SK-N-SH (cell line): ENCODE measurements at regions of chr6 and their contacts with region 1.

Region 1: DNA sequence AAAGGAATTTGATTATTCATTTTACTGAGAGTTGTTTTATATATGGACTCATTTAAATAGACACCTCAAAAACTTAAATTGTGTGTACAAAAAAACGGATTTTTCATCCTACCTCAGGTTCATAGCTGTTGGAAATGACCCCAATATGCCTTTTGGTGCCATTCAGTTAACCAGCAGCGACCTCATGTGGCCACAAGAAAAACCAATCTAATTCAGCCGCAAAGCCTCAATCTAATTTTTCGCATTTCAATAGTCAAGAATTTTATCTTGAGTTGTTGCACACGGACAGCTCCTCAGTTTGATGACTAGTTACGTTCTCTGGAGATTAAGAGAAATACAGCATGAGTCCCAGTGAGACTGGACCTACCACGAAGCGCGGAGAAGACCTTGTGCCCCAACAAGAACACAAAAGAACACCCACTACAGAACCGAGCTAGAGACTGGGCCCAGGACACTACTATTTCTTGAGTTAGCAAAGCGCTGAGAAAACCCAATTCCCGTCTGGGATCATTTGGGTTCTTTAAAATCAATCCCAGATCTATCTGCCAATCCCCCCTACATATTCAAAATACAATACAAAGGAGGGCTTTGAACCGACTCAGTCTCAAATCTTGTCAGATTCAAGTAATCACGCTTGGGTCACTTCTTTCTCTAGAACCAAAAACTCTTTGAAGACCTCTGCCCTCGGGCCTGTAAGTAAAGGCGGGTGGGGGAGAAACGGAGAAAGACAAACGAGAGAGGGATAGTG is 1.1 kb downstream of the TCP11 start:
- DNase-seq: peak; percentile 70
- H3K4me3 ChIP-seq: peak overlapping the region in 1 of 2 experiments; percentile 14; a peak in 1 of 4 replicates
- H3K27ac ChIP-seq: no peak overlapping the region
- H3K4me1 ChIP-seq: no peaks in the 10 kb centered on the region
- H3K27me3 ChIP-seq: no peaks in the 10 kb centered on the region
- CTCF ChIP-seq: peak; percentile 94
- EP300 ChIP-seq: no peak
- RAD21 ChIP-seq: peak; percentile 99

Region 2: GRCh38 chr6:34979218-34979617 is 160.9 kb before region 1 on chr6:
- CTCF ChIA-PET with region 1: interaction called, 108 read pairs
- POLR2A ChIA-PET with region 1: no interaction called
- DNase-seq: no peak
- H3K4me3 ChIP-seq: no peak overlapping the region
- H3K27ac ChIP-seq: no peak overlapping the region; a peak in 1 of 4 replicates
- H3K4me1 ChIP-seq: peaks cover 3 to 8% of the 10 kb centered on the region in 2 experiments; a peak in 3 of 4 replicates
- H3K27me3 ChIP-seq: no peaks in the 10 kb centered on the region
- CTCF ChIP-seq: no peak
- EP300 ChIP-seq: no peak
- RAD21 ChIP-seq: no peak

Region 3: DNA sequence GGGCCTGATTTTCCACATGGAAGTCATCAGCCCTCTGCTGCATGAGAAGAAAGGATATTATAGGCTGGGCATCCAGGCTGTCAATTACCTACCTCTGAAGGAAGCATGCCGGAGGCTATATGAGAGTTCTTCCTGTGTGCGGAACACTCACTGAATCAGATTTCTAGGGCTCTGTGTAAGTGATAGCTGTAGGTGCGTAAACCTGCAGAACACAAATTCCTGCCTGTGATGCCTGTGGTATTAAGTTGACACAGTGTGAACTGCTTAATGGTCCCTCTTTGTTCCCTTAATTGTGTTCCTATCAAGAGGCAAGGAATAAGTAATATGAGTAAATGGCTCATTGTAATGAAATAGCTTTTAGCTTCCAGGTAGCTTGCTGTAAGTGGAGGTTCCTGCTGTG is 147.7 kb before region 1 on chr6:
- CTCF ChIA-PET with region 1: interaction called, 108 read pairs
- POLR2A ChIA-PET with region 1: no interaction called
- DNase-seq: no peak
- H3K4me3 ChIP-seq: no peak overlapping the region
- H3K27ac ChIP-seq: no peak overlapping the region
- H3K4me1 ChIP-seq: no peaks in the 10 kb centered on the region; a peak in 1 of 4 replicates
- H3K27me3 ChIP-seq: no peaks in the 10 kb centered on the region
- CTCF ChIP-seq: no peak
- EP300 ChIP-seq: no peak
- RAD21 ChIP-seq: no peak

Region 4: DNA sequence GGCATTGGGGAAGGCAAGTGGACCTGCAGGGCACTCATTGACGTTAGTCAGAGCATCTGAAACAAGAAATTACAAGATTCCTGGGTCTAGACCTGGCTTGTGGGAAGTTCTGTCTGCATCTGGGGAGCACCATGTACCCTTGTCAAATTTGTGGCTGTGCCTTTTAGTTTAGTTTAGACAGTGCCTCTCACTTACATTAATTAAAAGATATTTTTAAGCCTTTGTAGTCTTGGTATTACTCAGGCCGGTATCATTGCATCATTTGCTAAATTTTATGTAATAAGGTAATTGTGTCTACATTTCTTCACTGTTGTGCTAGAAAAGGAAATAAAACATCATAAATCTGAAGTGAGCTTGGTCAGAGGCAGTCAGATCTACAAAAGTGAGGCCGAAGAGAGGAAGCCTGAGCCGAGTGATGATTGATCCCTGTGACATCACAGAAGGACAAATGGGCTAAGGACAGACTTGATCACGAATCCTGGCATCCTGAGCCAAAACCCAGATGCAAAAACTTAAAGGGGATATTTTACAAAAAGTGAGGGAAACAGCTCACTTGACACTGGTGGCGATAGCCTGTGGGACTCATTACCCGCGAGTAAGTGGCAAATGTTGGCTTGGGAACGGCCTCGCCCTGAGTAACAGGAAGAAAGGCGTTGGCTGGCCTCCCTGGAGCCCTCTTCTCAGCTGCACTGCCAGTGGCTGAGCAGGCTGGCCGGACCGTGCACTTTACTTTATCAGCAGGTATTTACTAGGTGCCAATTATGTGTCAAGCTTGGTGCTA is 105.5 kb before region 1 on chr6:
- CTCF ChIA-PET with region 1: no interaction called
- POLR2A ChIA-PET with region 1: no interaction called
- DNase-seq: no peak
- H3K4me3 ChIP-seq: no peak overlapping the region
- H3K27ac ChIP-seq: no peak overlapping the region
- H3K4me1 ChIP-seq: peaks cover 0 to 15% of the 10 kb centered on the region in 2 experiments; a peak in 1 of 4 replicates
- H3K27me3 ChIP-seq: no peaks in the 10 kb centered on the region
- CTCF ChIP-seq: no peak
- EP300 ChIP-seq: no peak
- RAD21 ChIP-seq: no peak

Region 5: GRCh38 chr6:35152067-35152707 is 12.1 kb after region 1 on chr6:
- CTCF ChIA-PET with region 1: interaction called, 27 read pairs
- POLR2A ChIA-PET with region 1: no interaction called
- DNase-seq: no peak
- H3K4me3 ChIP-seq: no peak overlapping the region
- H3K27ac ChIP-seq: peak overlapping the region in 1 of 2 experiments; percentile 25; a peak in 2 of 4 replicates
- H3K4me1 ChIP-seq: peaks cover 0 to 12% of the 10 kb centered on the region in 2 experiments; a peak in 2 of 4 replicates
- H3K27me3 ChIP-seq: no peaks in the 10 kb centered on the region
- CTCF ChIP-seq: no peak
- EP300 ChIP-seq: no peak
- RAD21 ChIP-seq: no peak

Region 6: GRCh38 chr6:35202066-35202546 is 62.0 kb after region 1 on chr6:
- CTCF ChIA-PET with region 1: interaction called, 68 read pairs
- POLR2A ChIA-PET with region 1: no interaction called
- DNase-seq: no peak
- H3K4me3 ChIP-seq: no peak overlapping the region
- H3K27ac ChIP-seq: no peak overlapping the region
- H3K4me1 ChIP-seq: no peaks in the 10 kb centered on the region
- H3K27me3 ChIP-seq: no peaks in the 10 kb centered on the region
- CTCF ChIP-seq: no peak
- EP300 ChIP-seq: no peak
- RAD21 ChIP-seq: no peak

Region 7: DNA sequence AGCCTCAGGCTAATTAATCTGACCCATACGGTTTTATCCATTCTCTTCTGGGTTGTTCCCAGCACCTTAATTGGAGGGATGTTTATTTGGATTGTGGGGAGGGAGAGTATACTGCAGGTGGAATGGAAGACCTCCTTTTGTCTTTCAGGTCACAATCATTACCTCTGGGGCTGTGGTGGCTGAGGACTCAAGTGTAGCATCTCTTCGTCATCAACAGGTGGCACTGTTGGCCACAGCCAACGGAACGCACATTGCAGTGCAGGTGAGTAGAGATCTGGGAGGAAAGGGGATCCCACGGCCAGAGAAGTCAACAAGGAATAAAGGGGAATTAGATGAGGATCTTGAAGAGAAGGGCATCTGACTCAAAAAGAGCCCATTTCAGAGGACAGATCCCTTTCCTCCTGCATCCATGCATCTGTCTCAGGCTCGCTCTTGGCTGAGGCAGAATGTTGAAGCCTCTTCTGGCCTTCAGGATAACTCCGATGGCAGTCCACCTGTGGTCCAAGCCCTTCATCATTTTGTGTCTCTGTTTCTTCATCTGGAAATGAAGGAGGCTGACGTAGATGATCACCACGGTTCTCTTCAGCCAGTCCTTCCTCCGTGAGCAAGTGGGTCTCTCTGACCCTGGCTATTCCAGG is 154.3 kb after region 1 on chr6:
- CTCF ChIA-PET with region 1: no interaction called
- POLR2A ChIA-PET with region 1: no interaction called
- DNase-seq: peak; percentile 86
- H3K4me3 ChIP-seq: no peak overlapping the region; a peak in 1 of 4 replicates
- H3K27ac ChIP-seq: no peak overlapping the region
- H3K4me1 ChIP-seq: peaks cover 0 to 4% of the 10 kb centered on the region in 2 experiments; a peak in 1 of 4 replicates
- H3K27me3 ChIP-seq: no peaks in the 10 kb centered on the region
- CTCF ChIP-seq: peak; percentile 72
- EP300 ChIP-seq: no peak
- RAD21 ChIP-seq: peak; percentile 85